Activated CD4-positive, alpha-beta memory T cell treated with anti-CD3 and anti-CD28 coated beads for 36 hours (primary cell): ENCODE measurements at regions of chr10 and their contacts with region 1.

Region 1: GRCh38 chr10:50561816-50562215 is 61.9 kb downstream of the SGMS1 start:
- DNase-seq: no peak
- H3K4me3 Mint-ChIP-seq: no peak overlapping the region
- H3K27ac Mint-ChIP-seq: no peak overlapping the region
- H3K4me1 Mint-ChIP-seq: peaks cover 8% of the 10 kb centered on the region
- H3K27me3 Mint-ChIP-seq: no peaks in the 10 kb centered on the region

Region 2: DNA sequence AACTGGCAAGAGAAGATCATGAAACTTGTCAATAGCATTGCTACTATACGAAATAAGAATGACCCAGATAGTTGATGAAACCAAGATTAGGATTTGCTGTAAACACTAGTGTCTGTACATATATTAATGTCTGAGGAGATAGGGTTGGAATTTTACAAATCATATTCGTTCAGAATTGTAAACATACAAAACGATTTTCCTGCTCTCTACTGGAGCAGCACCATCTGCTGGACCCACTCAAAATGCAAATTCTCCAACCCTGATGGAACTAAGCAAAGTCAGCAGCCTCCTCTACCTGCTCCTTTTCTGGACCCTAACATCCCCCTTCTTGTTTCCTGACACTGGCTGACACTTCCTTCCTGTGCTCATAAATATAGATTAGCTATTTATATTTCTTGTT is 91.3 kb after region 1 on chr10:
- CTCF ChIA-PET with region 1: interaction called, 3 read pairs
- POLR2A ChIA-PET with region 1: no interaction called
- intact Hi-C with region 1: loop called (anchors 1 kb)
- DNase-seq: peak; percentile 32
- H3K4me3 Mint-ChIP-seq: no peak overlapping the region
- H3K27ac Mint-ChIP-seq: no peak overlapping the region
- H3K4me1 Mint-ChIP-seq: peaks cover 14% of the 10 kb centered on the region
- H3K27me3 Mint-ChIP-seq: no peaks in the 10 kb centered on the region

Region 3: DNA sequence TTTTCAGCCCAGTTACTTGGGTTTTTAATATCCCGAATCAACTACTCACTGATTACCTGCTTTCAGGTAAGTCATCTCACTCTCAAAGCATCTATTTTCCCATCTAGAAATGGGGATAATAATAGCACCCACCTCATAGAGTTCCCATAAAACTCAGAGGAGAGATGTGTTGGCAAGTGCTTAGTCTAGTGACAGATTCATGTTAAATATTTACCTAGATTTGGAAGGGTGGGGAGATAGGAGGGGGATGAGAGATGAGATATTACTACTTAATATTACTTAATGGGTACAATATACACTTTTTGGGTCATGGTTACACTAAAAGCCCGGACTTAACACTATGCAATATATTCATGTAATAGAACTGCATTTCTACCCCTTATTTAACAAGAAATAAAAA is 330.7 kb after region 1 on chr10:
- CTCF ChIA-PET with region 1: no interaction called
- POLR2A ChIA-PET with region 1: no interaction called
- intact Hi-C with region 1: loop called (anchors 5 kb)
- DNase-seq: no peak
- H3K4me3 Mint-ChIP-seq: no peak overlapping the region
- H3K27ac Mint-ChIP-seq: no peak overlapping the region
- H3K4me1 Mint-ChIP-seq: no peaks in the 10 kb centered on the region
- H3K27me3 Mint-ChIP-seq: peaks cover 5% of the 10 kb centered on the region

Region 4: GRCh38 chr10:52185256-52185655 is 1623.4 kb after region 1 on chr10:
- CTCF ChIA-PET with region 1: no interaction called
- POLR2A ChIA-PET with region 1: no interaction called
- intact Hi-C with region 1: no loop called
- DNase-seq: no peak
- H3K4me3 Mint-ChIP-seq: no peak overlapping the region
- H3K27ac Mint-ChIP-seq: no peak overlapping the region
- H3K4me1 Mint-ChIP-seq: no peaks in the 10 kb centered on the region
- H3K27me3 Mint-ChIP-seq: no peaks in the 10 kb centered on the region